Left cardiac atrium (tissue), 4 donors: ENCODE measurements at regions of chr6 and their contacts with region 1.

Region 1: GRCh38 chr6:4055420-4056041 is 23.4 kb downstream of the FAM217A start:
- DNase-seq: no peak
- ATAC-seq: peak; percentile 84 to 89

Region 2: DNA sequence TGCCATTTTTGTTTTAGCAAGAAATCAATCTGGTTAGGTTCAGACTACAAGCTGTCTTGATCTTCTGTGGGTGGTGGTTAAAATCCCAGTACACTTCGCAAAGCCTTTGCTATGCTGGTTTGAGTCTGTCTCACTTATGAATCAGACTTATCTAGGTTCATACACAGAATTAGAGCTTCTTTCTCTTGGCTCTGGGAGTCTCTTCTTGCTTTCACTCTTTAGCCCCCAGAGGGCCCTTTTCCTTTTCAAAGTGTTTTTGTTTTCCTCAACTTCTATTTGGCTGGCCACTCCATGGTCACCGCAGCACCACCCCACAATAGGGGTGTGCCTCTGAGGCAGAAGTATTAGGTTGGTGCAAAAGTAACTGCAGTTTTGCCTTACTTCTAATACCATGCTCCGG is 58.6 kb after region 1 on chr6:
- intact Hi-C with region 1: no loop called
- DNase-seq: no peak
- ATAC-seq: no peak

Region 3: GRCh38 chr6:4155848-4156466 is 100.4 kb after region 1 on chr6:
- intact Hi-C with region 1: loop called (anchors 5 kb)
- DNase-seq: peak; percentile 71
- ATAC-seq: peak; percentile 82 to 87